ENCODE measurements at regions of chr7 and their contacts with region 1.

Region 1: GRCh38 chr7:102396027-102397019 is at the start of gene PRKRIP1:
- DNase-seq: peak; percentile 90
- ATAC-seq: peak; percentile 92
- H3K4me3 ChIP-seq: peak within 1 kb of the TSS; percentile 92
- H3K27ac ChIP-seq: peak within 1 kb of the TSS; percentile 67
- H3K4me1 ChIP-seq: peaks cover 11% of the 10 kb centered on the region
- H3K27me3 ChIP-seq: no peaks in the 10 kb centered on the region
- CTCF ChIP-seq: no peak
- total RNA-seq, gene PRKRIP1: 28.9 and 49.4 TPM in 2 replicates

Region 2: GRCh38 chr7:101629171-101629570 is 767.2 kb before region 1 on chr7 and contains the start of gene MYL10:
- CTCF ChIA-PET with region 1: no interaction called
- POLR2A ChIA-PET with region 1: interaction called, 11 read pairs
- intact Hi-C with region 1: no loop called
- DNase-seq: no peak
- ATAC-seq: no peak
- H3K4me3 ChIP-seq: no peak within 1 kb of the TSS
- H3K27ac ChIP-seq: peak within 1 kb of the TSS; percentile 83
- H3K4me1 ChIP-seq: peaks cover 22% of the 10 kb centered on the region
- H3K27me3 ChIP-seq: no peaks in the 10 kb centered on the region
- CTCF ChIP-seq: no peak
- total RNA-seq, gene MYL10: 0.69 TPM in 1 of 2 replicates, not detected in the other

Region 3: GRCh38 chr7:102286237-102287110 is 109.8 kb before region 1 on chr7 and contains the start of gene SH2B2:
- CTCF ChIA-PET with region 1: no interaction called
- POLR2A ChIA-PET with region 1: no interaction called
- intact Hi-C with region 1: no loop called
- DNase-seq: peak; percentile 49
- ATAC-seq: peak; percentile 55
- H3K4me3 ChIP-seq: peak within 1 kb of the TSS; percentile 84
- H3K27ac ChIP-seq: no peak within 1 kb of the TSS
- H3K4me1 ChIP-seq: peaks cover 11% of the 10 kb centered on the region
- H3K27me3 ChIP-seq: no peaks in the 10 kb centered on the region
- CTCF ChIP-seq: no peak
- total RNA-seq, gene SH2B2: 8.8 and 10.7 TPM in 2 replicates

Region 4: GRCh38 chr7:102450242-102450641 is 53.9 kb after region 1 on chr7:
- CTCF ChIA-PET with region 1: no interaction called
- POLR2A ChIA-PET with region 1: no interaction called
- intact Hi-C with region 1: loop called (anchors 5 kb)
- DNase-seq: peak; percentile 51
- ATAC-seq: peak; percentile 75
- H3K4me3 ChIP-seq: no peak overlapping the region
- H3K27ac ChIP-seq: no peak overlapping the region
- H3K4me1 ChIP-seq: peaks cover 5% of the 10 kb centered on the region; the same call in 1 of the 2 replicates
- H3K27me3 ChIP-seq: no peaks in the 10 kb centered on the region
- CTCF ChIP-seq: peak; percentile 54

Measured in PC-3 (cell line).